ENCODE measurements at regions of chr6 and their contacts with region 1.

Region 1: GRCh38 chr6:119442776-119443184 is 93.2 kb upstream of the MAN1A1 start:
- DNase-seq: no peak
- ATAC-seq: peak; percentile 29
- H3K4me3 Mint-ChIP-seq: peak overlapping the region; percentile 2
- H3K27ac Mint-ChIP-seq: no peak overlapping the region
- H3K4me1 Mint-ChIP-seq: peaks cover 43% of the 10 kb centered on the region
- H3K27me3 Mint-ChIP-seq: no peaks in the 10 kb centered on the region
- CTCF ChIP-seq: no peak

Region 2: DNA sequence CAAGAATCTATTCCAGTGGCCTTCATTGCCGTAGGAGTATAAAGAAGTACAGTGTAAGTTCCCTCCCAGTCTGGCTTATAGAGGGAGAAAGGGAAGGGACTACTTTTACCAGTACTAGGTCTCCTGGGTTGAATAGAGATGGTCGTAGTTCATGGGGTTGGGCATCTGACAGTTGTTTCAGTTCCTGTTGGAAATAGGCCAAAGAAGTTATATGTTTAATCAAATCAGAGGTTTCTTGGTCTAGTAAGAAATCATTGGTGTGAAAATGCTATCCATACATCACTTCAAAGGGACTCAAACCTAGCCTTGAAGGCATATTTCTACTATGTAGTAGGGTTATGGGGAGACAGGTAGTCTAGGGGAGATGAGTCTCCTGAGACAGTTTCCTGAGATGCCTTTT is 47.6 kb before region 1 on chr6:
- CTCF ChIA-PET with region 1: no interaction called
- POLR2A ChIA-PET with region 1: no interaction called
- intact Hi-C with region 1: loop called (anchors 5 kb)
- DNase-seq: no peak
- ATAC-seq: peak; percentile 91
- H3K4me3 Mint-ChIP-seq: no peak overlapping the region
- H3K27ac Mint-ChIP-seq: no peak overlapping the region
- H3K4me1 Mint-ChIP-seq: peaks cover 21% of the 10 kb centered on the region
- H3K27me3 Mint-ChIP-seq: peaks cover 13% of the 10 kb centered on the region
- CTCF ChIP-seq: no peak

Region 3: GRCh38 chr6:119459207-119459974 is 16.6 kb after region 1 on chr6:
- CTCF ChIA-PET with region 1: no interaction called
- POLR2A ChIA-PET with region 1: no interaction called
- intact Hi-C with region 1: loop called (anchors 2 kb)
- DNase-seq: no peak
- ATAC-seq: peak; percentile 63
- H3K4me3 Mint-ChIP-seq: no peak overlapping the region
- H3K27ac Mint-ChIP-seq: peak overlapping the region; percentile 16
- H3K4me1 Mint-ChIP-seq: peaks cover 35% of the 10 kb centered on the region
- H3K27me3 Mint-ChIP-seq: no peaks in the 10 kb centered on the region
- CTCF ChIP-seq: no peak